ENCODE measurements at regions of chr9 and their contacts with region 1.

Region 1: DNA sequence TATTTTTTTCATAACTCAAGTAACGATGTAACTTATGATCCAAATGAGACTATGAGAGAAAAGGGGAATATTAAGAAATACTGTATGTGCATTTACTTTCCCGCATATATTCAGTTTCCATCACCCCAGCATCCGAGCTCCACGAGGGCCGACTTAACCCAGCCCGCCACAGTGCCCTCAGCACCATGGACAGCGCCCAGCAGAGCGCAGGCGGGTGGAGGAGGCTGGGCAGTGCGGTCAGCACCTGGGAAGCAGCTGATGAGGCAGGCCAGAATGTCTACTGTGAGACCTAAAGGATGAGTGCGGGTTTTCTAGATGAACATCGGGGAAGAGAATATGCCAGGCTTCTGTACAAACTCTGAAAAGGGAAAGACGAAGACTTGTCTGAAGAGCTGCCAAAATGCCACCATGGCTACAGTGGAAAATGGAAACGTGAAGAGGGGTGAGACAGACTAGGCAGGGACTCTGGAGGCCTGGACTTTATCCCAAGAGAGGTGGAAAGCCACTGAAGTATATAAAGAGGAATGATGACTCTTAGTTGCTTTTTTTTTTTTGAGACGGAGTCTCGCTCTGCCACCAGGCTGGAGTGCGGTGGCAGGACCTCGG is 34.5 kb upstream of the MED27 start:
- DNase-seq: peak; percentile 60 to 68
- ATAC-seq: peak; percentile 76 to 91 (median 83)
- H3K4me3 ChIP-seq: no peak overlapping the region
- H3K27ac ChIP-seq: no peak overlapping the region
- H3K4me1 ChIP-seq: no peaks in the 10 kb centered on the region
- H3K27me3 ChIP-seq: peaks cover 0 to 36% (median 33%) of the 10 kb centered on the region in 7 donors
- CTCF ChIP-seq: no peak

Region 2: GRCh38 chr9:131773911-131774379 is 340.3 kb before region 1 on chr9:
- intact Hi-C with region 1: loop called in 1 of 10 experiments (anchors 10 kb)
- DNase-seq: peak in 1 of 2 donors; percentile 74
- ATAC-seq: peak in 7 of 8 donors; percentile 56 to 75 (median 70)
- H3K4me3 ChIP-seq: no peak overlapping the region
- H3K27ac ChIP-seq: no peak overlapping the region
- H3K4me1 ChIP-seq: no peaks in the 10 kb centered on the region
- H3K27me3 ChIP-seq: peaks cover 0 to 23% (median 8%) of the 10 kb centered on the region in 7 donors
- CTCF ChIP-seq: no peak

Region 3: GRCh38 chr9:132240753-132241493 is 126.7 kb after region 1 on chr9:
- intact Hi-C with region 1: no loop called
- DNase-seq: peak; percentile 98 to 99
- ATAC-seq: peak; percentile 91 to 94 (median 93)
- H3K4me3 ChIP-seq: peak overlapping the region; percentile 51 to 84 (median 66)
- H3K27ac ChIP-seq: peak overlapping the region in 4 of 10 donors; percentile 23 to 78 (median 47)
- H3K4me1 ChIP-seq: peaks cover 3 to 58% (median 27%) of the 10 kb centered on the region in 9 donors
- H3K27me3 ChIP-seq: peaks cover 0 to 15% (median 3%) of the 10 kb centered on the region in 7 donors
- CTCF ChIP-seq: no peak

Measured in heart right ventricle (tissue), 16 donors.